Body of pancreas (tissue), 4 donors: ENCODE measurements at regions of chr2 and their contacts with region 1.

Region 1: GRCh38 chr2:231557571-231558237 is 27.5 kb upstream of the NMUR1 start:
- DNase-seq: peak; percentile 60 to 85 (median 68)
- ATAC-seq: peak; percentile 93
- H3K4me3 ChIP-seq: no peak overlapping the region
- H3K27ac ChIP-seq: peak overlapping the region in 1 of 4 donors; percentile 17
- H3K4me1 ChIP-seq: peaks cover 5% of the 10 kb centered on the region
- H3K27me3 ChIP-seq: no peaks in the 10 kb centered on the region
- CTCF ChIP-seq: peak; percentile 21 to 88 (median 67)
- POLR2A ChIP-seq: no peak

Region 2: DNA sequence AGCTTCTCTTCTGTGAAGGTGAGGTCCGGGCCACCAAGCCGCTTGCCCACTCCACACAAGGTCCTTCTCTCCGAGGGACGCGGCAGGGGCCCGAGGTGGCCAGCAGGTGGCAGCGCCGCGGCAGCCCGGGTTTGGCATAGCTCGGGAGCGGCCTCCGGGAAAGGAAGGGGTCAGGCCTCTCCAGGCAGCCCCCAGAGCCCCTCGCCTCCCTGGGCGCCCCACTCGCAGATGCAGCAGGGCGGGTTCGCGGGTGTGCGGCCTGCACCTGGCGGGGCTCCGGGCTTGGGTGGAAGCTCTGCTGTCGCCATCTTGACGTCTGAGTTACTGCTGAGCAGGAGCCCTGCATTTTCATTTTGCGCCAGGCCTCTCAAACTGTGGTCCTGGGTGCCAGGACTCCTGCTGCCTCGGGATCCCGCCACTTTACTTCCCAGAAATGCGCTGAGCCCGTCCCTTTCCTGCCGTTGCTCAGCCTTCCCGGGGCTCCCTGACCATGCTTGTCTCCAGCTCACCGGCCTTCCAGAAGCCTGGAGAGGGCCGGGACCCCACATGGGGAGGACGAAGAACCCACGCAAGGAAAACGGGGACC is 74.8 kb before region 1 on chr2:
- intact Hi-C with region 1: loop called (anchors 5 kb)
- DNase-seq: peak; percentile 75 to 83 (median 81)
- ATAC-seq: peak; percentile 95
- H3K4me3 ChIP-seq: no peak overlapping the region
- H3K27ac ChIP-seq: peak overlapping the region in 3 of 4 donors; percentile 25 to 48 (median 47)
- H3K4me1 ChIP-seq: no peaks in the 10 kb centered on the region
- H3K27me3 ChIP-seq: no peaks in the 10 kb centered on the region
- CTCF ChIP-seq: peak; percentile 79 to 97 (median 87)
- POLR2A ChIP-seq: peak in 2 of 3 donors; percentile 43 to 56